ENCODE measurements at regions of chr2 and their contacts with region 1.

Region 1: DNA sequence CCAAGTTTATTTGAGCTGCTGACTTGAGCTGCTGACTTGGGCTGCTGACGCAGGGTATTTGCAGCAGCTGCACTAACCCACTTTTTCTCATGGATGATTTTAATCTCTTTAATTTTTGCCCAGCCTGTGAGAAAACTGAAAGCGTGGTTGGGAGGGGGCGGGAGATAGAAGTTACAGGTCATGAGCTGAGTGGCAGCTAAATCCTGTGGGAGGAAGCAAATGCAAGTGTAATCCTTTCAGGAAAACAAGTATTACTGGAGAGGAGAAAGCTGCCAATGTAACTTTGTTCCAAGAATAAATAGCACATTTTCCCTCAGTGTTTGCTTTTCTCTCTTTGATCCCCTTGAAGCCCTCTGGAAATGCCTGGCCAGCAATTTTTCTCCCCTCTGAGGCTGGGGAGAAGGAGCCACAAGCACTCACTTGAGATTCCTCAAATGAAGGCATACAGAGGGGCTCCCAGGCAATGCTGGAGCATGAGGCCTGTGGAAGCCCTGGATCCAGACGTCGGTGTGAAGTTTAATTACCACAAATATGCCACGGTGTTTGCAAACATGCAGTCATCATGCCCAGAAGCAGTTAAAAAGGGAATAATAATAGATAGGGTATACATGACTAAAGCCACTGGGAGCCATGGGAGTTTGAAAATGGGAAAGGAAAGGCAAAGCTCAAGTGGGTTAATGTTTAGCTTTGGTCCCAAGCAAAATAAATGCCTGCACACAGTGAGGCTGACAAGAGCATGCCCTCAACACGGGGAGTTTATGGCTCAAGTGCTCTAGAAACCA is 10.4 kb upstream of the EVA1A start:
- DNase-seq: no peak
- H3K4me3 ChIP-seq: no peak overlapping the region
- CTCF ChIP-seq: no peak

Region 2: DNA sequence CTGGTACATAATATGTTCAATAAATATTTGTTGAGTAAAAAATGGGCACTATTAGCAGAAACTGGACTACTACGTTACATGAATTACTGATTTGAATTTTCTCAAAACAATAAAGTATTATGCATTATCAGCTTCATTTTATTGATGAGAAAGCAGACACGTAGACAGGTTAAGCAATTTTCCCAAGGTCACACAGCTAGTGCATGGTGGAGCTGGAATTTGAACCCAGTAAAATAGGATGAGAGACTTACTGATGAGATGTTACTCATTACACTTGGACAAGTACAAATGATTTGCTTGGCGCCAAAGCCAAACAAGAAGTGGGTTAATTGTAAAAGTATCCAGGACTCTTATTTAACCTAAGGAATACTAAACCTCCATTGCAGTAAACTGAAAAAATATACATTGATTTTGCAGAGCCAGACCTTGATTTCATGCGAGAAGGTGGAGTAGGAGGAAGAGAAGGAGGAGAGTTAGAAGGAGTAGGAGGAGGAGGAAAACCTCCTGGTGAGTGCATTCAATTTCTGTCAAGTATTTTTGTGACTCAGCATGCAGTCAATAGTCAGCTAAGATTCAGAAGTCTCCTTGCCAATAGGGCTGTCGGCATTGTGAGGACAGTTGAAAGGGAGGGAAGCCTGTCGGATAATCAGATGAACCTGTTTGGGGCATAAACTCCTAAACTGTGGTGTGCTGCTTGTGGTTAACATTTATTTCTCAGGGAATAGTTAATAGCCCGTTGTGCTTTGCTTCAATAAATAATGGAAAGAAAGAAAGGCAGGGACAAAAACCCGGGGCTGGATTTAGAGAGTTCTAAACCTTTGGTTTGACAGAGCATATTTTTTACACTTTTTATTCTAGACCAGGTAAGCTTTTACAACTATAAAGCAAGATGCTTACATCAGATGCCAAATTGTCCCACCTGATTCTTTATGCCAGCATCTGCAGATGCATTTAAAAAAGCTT is 294.8 kb before region 1 on chr2:
- CTCF ChIA-PET with region 1: no interaction called
- POLR2A ChIA-PET with region 1: no interaction called
- DNase-seq: no peak
- H3K4me3 ChIP-seq: peak overlapping the region; percentile 26
- CTCF ChIP-seq: no peak

Region 3: GRCh38 chr2:75592028-75592427 is 20.9 kb after region 1 on chr2:
- CTCF ChIA-PET with region 1: interaction called, 12 read pairs
- POLR2A ChIA-PET with region 1: interaction called, 4 read pairs
- DNase-seq: no peak
- H3K4me3 ChIP-seq: no peak overlapping the region
- CTCF ChIP-seq: no peak